Adrenal gland (tissue), 19 donors: ENCODE measurements at regions of chrX and their contacts with region 1.

Region 1: DNA sequence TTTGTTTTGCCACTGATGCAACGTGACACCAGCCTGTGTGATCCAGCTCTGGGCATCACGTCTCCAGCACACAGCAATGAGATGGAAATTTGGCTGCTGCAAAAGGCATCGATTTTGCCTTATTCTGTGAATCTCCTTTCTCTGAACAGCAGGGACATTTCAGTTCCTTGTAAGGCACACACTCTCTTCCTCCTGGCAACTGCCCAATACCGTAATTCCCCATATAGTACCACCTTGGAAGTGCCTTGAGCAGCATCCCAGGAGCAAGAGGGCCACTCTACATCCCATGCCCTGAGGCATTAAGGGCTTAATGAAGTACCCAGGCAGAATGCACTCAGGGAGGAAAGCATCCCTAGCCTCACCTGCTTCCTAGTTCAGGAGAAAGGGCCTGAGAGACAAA is 10.5 kb upstream of the MAMLD1 start:
- DNase-seq: peak in 2 of 7 donors; percentile 7 to 24
- H3K4me3 ChIP-seq: no peak overlapping the region
- H3K27ac ChIP-seq: no peak overlapping the region
- H3K4me1 ChIP-seq: no peaks in the 10 kb centered on the region
- H3K27me3 ChIP-seq: no peaks in the 10 kb centered on the region
- CTCF ChIP-seq: no peak
- POLR2A ChIP-seq: no peak

Region 2: GRCh38 chrX:150200820-150201287 is 151.7 kb before region 1 on chrX:
- intact Hi-C with region 1: loop called in 1 of 2 experiments (anchors 10 kb)
- DNase-seq: peak; percentile 78 to 92 (median 91)
- H3K4me3 ChIP-seq: no peak overlapping the region
- H3K27ac ChIP-seq: peak overlapping the region in 2 of 5 donors; percentile 54 to 68
- H3K4me1 ChIP-seq: peaks cover 0 to 6% of the 10 kb centered on the region in 2 donors
- H3K27me3 ChIP-seq: no peaks in the 10 kb centered on the region
- CTCF ChIP-seq: no peak
- POLR2A ChIP-seq: no peak

Region 3: GRCh38 chrX:150298841-150299551 is 53.6 kb before region 1 on chrX:
- intact Hi-C with region 1: no loop called
- DNase-seq: no peak
- H3K4me3 ChIP-seq: no peak overlapping the region
- H3K27ac ChIP-seq: no peak overlapping the region
- H3K4me1 ChIP-seq: no peaks in the 10 kb centered on the region
- H3K27me3 ChIP-seq: no peaks in the 10 kb centered on the region
- CTCF ChIP-seq: no peak
- POLR2A ChIP-seq: no peak

Region 4: GRCh38 chrX:150410513-150410912 is 57.9 kb after region 1 on chrX:
- intact Hi-C with region 1: loop called in 1 of 2 experiments (anchors 10 kb)
- DNase-seq: no peak
- H3K4me3 ChIP-seq: no peak overlapping the region
- H3K27ac ChIP-seq: no peak overlapping the region
- H3K4me1 ChIP-seq: no peaks in the 10 kb centered on the region
- H3K27me3 ChIP-seq: no peaks in the 10 kb centered on the region
- CTCF ChIP-seq: no peak
- POLR2A ChIP-seq: no peak

Region 5: DNA sequence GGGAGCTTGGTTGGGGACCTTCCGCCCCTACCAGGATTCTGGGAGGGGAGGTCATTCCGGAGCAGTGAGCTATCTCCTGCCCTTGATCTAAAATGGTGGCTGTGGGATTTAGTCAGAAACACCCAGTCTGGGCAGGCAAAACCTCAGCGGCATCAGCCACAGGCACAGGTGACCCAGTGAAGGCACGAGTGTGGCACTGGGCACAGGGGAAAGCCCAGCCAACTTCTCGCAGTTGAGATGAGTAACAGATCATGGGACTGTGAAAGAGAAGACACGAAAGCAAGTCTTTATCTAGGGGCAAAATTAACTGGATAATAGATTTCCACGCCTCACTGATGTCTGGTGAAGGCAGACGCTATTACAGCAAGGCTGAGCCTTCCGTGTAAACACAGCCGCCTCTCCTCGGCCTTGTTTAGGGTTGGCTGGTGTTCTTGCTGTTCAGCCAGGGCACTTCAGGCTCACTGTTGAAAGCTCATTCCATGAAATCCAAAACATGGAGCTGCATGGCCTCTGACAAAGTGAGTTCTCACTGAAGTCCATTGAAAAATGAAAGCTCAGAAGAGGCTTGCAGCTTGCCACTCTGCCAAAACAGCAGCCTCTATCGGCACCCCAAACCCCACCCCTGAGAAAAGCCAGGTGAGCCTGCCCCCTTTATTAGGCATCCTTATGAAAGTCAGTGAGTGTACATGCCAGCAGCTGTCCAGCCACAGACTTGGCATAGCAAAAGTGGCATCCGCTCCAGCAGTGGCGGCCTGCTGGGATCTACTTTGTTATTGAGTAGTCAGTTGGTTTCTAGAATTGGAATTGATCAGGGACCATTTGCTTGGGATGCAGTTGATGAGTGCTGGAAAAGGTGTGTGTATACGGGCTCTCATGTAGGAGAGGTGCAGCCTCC is 113.5 kb after region 1 on chrX:
- intact Hi-C with region 1: no loop called
- DNase-seq: no peak
- H3K4me3 ChIP-seq: no peak overlapping the region
- H3K27ac ChIP-seq: no peak overlapping the region
- H3K4me1 ChIP-seq: no peaks in the 10 kb centered on the region
- H3K27me3 ChIP-seq: no peaks in the 10 kb centered on the region
- CTCF ChIP-seq: no peak
- POLR2A ChIP-seq: no peak

Region 6: GRCh38 chrX:150558424-150558823 is 205.8 kb after region 1 on chrX:
- intact Hi-C with region 1: no loop called
- DNase-seq: no peak
- H3K4me3 ChIP-seq: no peak overlapping the region
- H3K27ac ChIP-seq: no peak overlapping the region
- H3K4me1 ChIP-seq: no peaks in the 10 kb centered on the region
- H3K27me3 ChIP-seq: peaks cover 4% of the 10 kb centered on the region
- CTCF ChIP-seq: no peak
- POLR2A ChIP-seq: no peak